ENCODE measurements at regions of chr2 and their contacts with region 1.

Region 1: GRCh38 chr2:11583840-11584524 is 50.1 kb downstream of the GREB1 start:
- DNase-seq: peak; percentile 83
- H3K4me3 ChIP-seq: no peak overlapping the region
- CTCF ChIP-seq: peak; percentile 91

Region 2: GRCh38 chr2:10832203-10832936 is 751.6 kb before region 1 on chr2:
- CTCF ChIA-PET with region 1: interaction called, 33 read pairs
- POLR2A ChIA-PET with region 1: no interaction called
- DNase-seq: peak; percentile 7
- H3K4me3 ChIP-seq: no peak overlapping the region
- CTCF ChIP-seq: peak; percentile 96

Region 3: DNA sequence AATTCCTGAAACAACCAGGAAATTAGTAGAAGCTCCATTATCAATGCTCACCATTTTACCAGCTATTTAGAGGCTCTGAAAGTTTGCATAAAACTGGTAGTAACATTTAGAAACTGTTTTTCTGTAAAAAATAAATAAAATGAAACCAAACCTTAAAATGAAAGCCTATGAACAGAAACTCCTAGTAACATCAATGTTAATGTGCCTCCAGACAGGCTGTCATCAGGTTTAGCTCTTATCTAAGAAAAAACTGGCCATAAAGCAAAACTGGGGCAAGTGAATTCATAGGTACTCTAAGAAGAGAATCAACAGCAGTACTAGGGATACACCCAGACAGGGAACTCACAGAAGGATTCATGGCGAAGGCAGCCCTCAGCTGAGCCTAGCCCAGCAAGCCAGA is 126.0 kb before region 1 on chr2:
- CTCF ChIA-PET with region 1: interaction called, 19 read pairs
- POLR2A ChIA-PET with region 1: no interaction called
- DNase-seq: no peak
- H3K4me3 ChIP-seq: no peak overlapping the region
- CTCF ChIP-seq: no peak

Region 4: DNA sequence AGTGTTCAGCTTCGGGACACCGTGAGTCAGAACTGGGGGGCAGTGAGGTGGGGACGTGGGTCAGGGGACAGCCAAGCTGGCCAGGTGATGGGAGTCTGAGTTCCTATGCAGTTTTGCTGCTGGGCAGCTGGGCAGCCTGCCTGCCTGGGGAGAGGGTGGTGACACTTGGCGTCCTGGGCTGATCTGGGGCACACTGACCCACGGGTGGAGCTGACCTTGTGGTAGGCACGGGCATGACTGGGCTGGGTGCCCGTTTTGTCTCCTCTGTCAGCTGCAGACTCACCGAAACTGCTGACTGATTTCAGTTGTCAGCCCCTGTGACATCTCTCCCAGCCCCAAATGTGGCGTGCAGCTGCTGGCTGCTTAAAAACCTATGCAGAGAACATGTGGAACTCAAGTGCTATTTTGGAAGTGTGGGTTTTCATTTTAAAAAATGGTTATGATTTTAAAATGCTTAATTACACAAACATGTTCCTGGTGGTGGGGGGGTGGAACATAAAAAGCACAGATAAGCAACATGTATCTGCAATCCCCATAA is 85.4 kb before region 1 on chr2:
- CTCF ChIA-PET with region 1: interaction called, 15 read pairs
- POLR2A ChIA-PET with region 1: no interaction called
- DNase-seq: no peak
- H3K4me3 ChIP-seq: no peak overlapping the region
- CTCF ChIP-seq: no peak

Region 5: GRCh38 chr2:11553661-11554398 is 30.2 kb before region 1 on chr2:
- CTCF ChIA-PET with region 1: interaction called, 134 read pairs
- POLR2A ChIA-PET with region 1: no interaction called
- DNase-seq: no peak
- H3K4me3 ChIP-seq: no peak overlapping the region
- CTCF ChIP-seq: no peak

Region 6: DNA sequence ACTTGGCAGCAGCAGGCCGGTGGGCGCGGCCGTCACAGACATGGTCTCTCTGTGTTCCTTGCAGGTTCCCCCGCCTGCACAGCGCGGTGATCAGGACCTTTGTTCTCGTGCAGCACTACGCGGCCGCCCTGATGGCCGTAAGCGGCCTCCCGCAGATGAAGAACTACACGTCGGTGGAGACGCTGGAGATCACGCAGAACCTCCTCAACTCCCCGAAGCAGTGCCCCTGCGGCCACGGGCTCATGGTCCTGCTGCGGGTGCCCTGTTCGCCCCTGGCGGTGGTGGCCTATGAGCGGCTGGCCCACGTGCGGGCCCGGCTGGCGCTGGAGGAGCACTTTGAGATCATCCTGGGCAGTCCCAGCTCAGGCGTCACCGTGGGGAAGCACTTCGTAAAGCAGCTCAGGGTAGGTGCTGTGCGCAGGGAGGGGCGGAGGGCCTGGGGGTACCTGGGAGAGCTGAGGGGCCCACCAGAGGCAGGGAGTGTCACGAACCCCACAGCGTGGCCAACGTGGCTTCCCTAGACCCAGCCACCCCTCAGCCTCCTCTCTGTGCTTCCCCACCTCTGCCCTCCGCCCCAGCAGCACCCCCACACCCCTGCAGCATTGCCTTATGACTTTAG is 26.8 kb after region 1 on chr2:
- CTCF ChIA-PET with region 1: interaction called, 10 read pairs
- POLR2A ChIA-PET with region 1: no interaction called
- DNase-seq: no peak
- H3K4me3 ChIP-seq: no peak overlapping the region
- CTCF ChIP-seq: no peak

Measured in AG04449 (cell line).